HEK293 (cell line): ENCODE measurements at regions of chr17 and their contacts with region 1.

Region 1: GRCh38 chr17:64479650-64480049 is 17.2 kb downstream of the POLG2 start:
- H3K4me3 ChIP-seq: no peak overlapping the region
- H3K27ac ChIP-seq: no peak overlapping the region
- H3K4me1 ChIP-seq: peaks cover 12% of the 10 kb centered on the region
- CTCF ChIP-seq: no peak

Region 2: GRCh38 chr17:64174686-64175456 is 304.8 kb before region 1 on chr17:
- CTCF ChIA-PET with region 1: no interaction called
- POLR2A ChIA-PET with region 1: no interaction called
- H3K4me3 ChIP-seq: no peak overlapping the region
- H3K27ac ChIP-seq: no peak overlapping the region
- H3K4me1 ChIP-seq: no peaks in the 10 kb centered on the region
- CTCF ChIP-seq: no peak

Region 3: DNA sequence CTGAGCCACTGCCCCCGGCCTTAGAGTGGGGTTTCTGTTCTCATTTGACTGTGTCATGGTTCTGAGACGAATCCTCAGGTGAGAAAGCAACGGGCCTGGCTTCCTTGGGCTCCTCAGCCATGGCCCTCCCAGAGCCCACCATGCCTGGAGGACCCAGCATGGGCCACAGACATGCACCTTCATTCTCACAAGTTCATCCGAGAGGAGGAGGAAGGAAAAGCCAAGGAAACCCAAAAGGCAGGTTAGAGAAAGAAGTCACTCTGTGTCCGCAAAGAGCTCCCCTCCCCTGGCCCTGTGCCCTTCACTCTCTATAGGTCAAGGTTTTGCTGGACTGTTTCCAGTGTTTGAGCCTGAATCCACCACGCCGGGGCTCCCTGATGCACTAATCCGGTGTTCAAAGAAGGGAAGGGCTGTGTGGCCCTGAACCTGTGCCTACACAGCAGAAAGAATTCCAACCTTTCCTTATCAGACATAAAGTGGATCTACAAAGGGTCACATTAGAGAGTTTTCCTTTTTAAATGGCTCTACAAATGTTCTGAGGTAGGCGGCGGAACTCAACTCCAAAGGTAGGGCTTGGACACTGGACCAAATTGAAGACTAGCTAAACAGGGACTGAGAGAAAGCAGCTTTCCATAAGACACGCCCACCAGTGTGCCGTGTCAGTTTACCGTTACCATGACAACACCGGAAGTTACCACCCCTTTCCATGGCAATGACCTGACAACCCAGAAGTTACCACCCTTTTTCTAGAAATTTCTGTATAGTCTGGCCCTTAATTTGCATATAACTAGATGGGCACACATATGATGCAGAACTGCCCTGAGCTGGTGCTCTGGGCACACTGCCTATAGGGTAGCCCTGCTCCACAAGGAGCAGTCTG is 73.1 kb before region 1 on chr17:
- CTCF ChIA-PET with region 1: no interaction called
- POLR2A ChIA-PET with region 1: no interaction called
- H3K4me3 ChIP-seq: no peak overlapping the region
- H3K27ac ChIP-seq: no peak overlapping the region
- H3K4me1 ChIP-seq: no peaks in the 10 kb centered on the region
- CTCF ChIP-seq: no peak

Region 4: DNA sequence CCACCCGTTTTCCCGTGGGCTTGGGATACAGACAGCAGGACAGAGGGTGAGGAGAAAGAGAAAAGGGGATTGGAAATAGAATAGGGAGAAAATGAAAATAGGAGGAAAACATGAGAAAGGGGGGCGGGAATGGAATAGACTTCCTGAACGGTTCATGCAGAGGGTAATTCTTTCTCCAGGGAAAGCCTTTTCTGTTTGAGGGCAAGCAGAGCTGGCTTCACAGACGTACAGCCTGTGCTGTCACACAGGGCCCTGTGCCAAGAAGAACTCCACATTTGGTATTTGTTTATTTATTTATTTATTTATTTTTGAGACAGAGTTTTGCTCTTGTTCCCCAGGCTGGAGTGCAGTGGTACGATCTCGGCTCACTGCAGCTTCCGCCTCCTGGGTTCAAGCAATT is 18.7 kb before region 1 on chr17:
- CTCF ChIA-PET with region 1: no interaction called
- POLR2A ChIA-PET with region 1: no interaction called
- H3K4me3 ChIP-seq: no peak overlapping the region
- H3K27ac ChIP-seq: no peak overlapping the region
- H3K4me1 ChIP-seq: no peaks in the 10 kb centered on the region
- CTCF ChIP-seq: no peak

Region 5: DNA sequence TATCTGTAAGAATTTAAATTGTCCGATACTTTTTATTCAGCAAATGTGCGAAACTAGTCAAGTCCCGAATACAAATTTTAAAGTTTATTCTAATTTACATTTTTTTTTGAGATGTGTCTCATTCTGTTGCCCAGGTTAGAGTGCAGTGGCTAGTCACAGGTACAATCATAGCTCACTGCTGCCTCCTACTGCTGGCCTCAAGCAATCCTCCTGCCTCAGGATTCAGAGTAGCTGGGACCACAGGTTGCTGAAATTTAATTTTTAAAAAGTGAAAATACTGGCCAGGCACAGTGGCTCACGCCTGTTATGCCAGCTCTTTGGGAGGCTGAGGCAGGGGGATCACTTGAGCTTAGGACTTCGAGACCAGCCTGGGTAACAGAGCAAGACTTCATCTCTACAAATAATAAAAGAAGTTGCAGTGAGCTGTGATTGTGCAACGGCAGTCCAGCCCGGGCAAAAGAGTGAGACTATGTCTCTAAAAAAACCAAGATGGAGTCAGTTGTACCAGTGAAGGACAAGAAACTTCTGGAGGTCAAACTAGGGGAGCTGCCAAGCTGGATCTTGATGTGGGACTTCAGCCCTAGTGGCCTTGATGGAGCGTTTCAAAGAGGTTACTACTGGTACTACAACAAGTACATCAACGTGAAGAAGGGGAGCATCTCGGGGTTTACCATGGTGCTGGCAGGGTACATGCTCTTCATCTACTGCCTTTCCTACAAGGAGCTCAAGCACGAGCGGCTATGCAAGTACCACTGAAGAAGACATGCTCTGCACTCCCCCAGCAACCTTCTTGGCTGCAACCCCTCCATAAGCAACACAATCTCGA is 11.6 kb after region 1 on chr17:
- CTCF ChIA-PET with region 1: interaction called, 11 read pairs
- POLR2A ChIA-PET with region 1: interaction called, 3 read pairs
- H3K4me3 ChIP-seq: no peak overlapping the region
- H3K27ac ChIP-seq: no peak overlapping the region
- H3K4me1 ChIP-seq: no peaks in the 10 kb centered on the region
- CTCF ChIP-seq: no peak

Region 6: GRCh38 chr17:64572638-64573154 is 93.0 kb after region 1 on chr17:
- CTCF ChIA-PET with region 1: no interaction called
- POLR2A ChIA-PET with region 1: no interaction called
- H3K4me3 ChIP-seq: no peak overlapping the region
- H3K27ac ChIP-seq: no peak overlapping the region
- H3K4me1 ChIP-seq: no peaks in the 10 kb centered on the region
- CTCF ChIP-seq: no peak